ENCODE measurements at regions of chr20 and their contacts with region 1.

Region 1: GRCh38 chr20:41003143-41003883 is 25.3 kb upstream of the TOP1 start:
- DNase-seq: peak; percentile 87 to 99
- H3K4me3 ChIP-seq: peak overlapping the region; percentile 45; the same call in 1 of the 2 replicates
- H3K27ac ChIP-seq: peak overlapping the region; percentile 95
- H3K4me1 ChIP-seq: peaks cover 65% of the 10 kb centered on the region
- H3K27me3 ChIP-seq: no peaks in the 10 kb centered on the region
- CTCF ChIP-seq: no peak

Region 2: GRCh38 chr20:41028348-41029148 is 25.2 kb after region 1 on chr20 and contains the start of gene TOP1:
- CTCF ChIA-PET with region 1: no interaction called
- POLR2A ChIA-PET with region 1: no interaction called
- intact Hi-C with region 1: loop called (anchors 1 kb)
- DNase-seq: peak; percentile 98 to 100
- H3K4me3 ChIP-seq: peak within 1 kb of the TSS; percentile 90
- H3K27ac ChIP-seq: peak within 1 kb of the TSS; percentile 90
- H3K4me1 ChIP-seq: peaks cover 44% of the 10 kb centered on the region
- H3K27me3 ChIP-seq: no peaks in the 10 kb centered on the region
- CTCF ChIP-seq: no peak
- total RNA-seq, gene TOP1: 39.1 and 55.8 TPM in 2 replicates

Region 3: DNA sequence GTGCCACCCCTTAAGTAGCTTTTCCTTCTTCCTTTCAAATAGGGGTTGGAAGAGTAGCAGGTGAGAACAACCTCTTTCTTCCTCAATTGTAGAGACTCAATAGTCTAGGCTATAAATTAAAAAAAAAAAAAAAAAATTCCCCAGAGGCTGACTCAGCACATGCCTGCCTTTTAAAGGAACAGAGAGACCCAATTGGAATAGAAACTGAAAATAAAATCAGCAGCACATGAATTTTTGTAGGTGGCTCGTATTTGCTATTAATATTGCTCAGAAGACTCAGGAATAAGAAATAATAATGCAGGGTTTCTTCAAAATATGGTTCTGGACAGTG is 44.6 kb after region 1 on chr20:
- CTCF ChIA-PET with region 1: no interaction called
- POLR2A ChIA-PET with region 1: interaction called, 4 read pairs
- intact Hi-C with region 1: loop called (anchors 2 kb)
- DNase-seq: peak in 1 of 2 experiments; percentile 45
- H3K4me3 ChIP-seq: peak overlapping the region; percentile 2; the same call in 1 of the 2 replicates
- H3K27ac ChIP-seq: peak overlapping the region; percentile 39
- H3K4me1 ChIP-seq: peaks cover 53% of the 10 kb centered on the region
- H3K27me3 ChIP-seq: no peaks in the 10 kb centered on the region
- CTCF ChIP-seq: no peak

Region 4: DNA sequence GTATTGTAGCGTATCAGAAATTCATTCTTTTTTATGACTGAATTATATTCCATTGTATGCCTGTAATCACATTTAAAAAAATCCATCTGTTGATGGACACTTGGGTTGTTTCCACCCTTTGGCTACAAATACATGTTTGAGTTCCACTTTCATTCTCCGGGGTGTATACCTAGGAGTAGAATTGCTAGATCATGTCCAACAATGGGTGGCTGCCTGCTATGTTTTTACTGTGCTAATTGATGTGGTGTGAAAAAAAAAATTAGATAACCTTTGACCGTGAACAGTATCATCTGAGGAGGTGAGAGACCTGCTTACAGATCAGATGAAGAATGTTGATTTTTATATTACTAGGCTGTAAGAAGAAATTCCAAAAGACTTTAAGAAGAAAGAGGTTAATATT is 62.4 kb after region 1 on chr20:
- CTCF ChIA-PET with region 1: no interaction called
- POLR2A ChIA-PET with region 1: no interaction called
- intact Hi-C with region 1: no loop called
- DNase-seq: no peak
- H3K4me3 ChIP-seq: no peak overlapping the region
- H3K27ac ChIP-seq: peak overlapping the region; percentile 9; the same call in 1 of the 2 replicates
- H3K4me1 ChIP-seq: no peaks in the 10 kb centered on the region
- H3K27me3 ChIP-seq: no peaks in the 10 kb centered on the region
- CTCF ChIP-seq: no peak

Region 5: GRCh38 chr20:41078329-41078728 is 75.0 kb after region 1 on chr20:
- CTCF ChIA-PET with region 1: no interaction called
- POLR2A ChIA-PET with region 1: no interaction called
- intact Hi-C with region 1: loop called (anchors 1 kb)
- DNase-seq: peak; percentile 45 to 88
- H3K4me3 ChIP-seq: no peak overlapping the region
- H3K27ac ChIP-seq: peak overlapping the region; percentile 25; the same call in 1 of the 2 replicates
- H3K4me1 ChIP-seq: peaks cover 11% of the 10 kb centered on the region
- H3K27me3 ChIP-seq: no peaks in the 10 kb centered on the region
- CTCF ChIP-seq: peak; percentile 79

Measured in PC-9 (cell line).